ENCODE measurements at regions of chr6 and their contacts with region 1.

Region 1: GRCh38 chr6:99588618-99589289 is 17.9 kb upstream of the PRDM13 start:
- DNase-seq: peak in 8 of 9 experiments; percentile 32 to 78 (median 66)
- ATAC-seq: peak; percentile 89
- H3K4me3 ChIP-seq: peak overlapping the region; percentile 53 to 74
- H3K4me3 Mint-ChIP-seq: peak overlapping the region; percentile 89
- H3K27ac ChIP-seq: no peak overlapping the region
- H3K27ac Mint-ChIP-seq: no peak overlapping the region
- H3K4me1 ChIP-seq: peaks cover 18% of the 10 kb centered on the region
- H3K4me1 Mint-ChIP-seq: peaks cover 28% of the 10 kb centered on the region
- H3K27me3 ChIP-seq: peaks cover 22 to 35% of the 10 kb centered on the region in 2 experiments
- H3K27me3 Mint-ChIP-seq: peaks cover 61% of the 10 kb centered on the region
- CTCF ChIP-seq: peak; percentile 50

Region 2: DNA sequence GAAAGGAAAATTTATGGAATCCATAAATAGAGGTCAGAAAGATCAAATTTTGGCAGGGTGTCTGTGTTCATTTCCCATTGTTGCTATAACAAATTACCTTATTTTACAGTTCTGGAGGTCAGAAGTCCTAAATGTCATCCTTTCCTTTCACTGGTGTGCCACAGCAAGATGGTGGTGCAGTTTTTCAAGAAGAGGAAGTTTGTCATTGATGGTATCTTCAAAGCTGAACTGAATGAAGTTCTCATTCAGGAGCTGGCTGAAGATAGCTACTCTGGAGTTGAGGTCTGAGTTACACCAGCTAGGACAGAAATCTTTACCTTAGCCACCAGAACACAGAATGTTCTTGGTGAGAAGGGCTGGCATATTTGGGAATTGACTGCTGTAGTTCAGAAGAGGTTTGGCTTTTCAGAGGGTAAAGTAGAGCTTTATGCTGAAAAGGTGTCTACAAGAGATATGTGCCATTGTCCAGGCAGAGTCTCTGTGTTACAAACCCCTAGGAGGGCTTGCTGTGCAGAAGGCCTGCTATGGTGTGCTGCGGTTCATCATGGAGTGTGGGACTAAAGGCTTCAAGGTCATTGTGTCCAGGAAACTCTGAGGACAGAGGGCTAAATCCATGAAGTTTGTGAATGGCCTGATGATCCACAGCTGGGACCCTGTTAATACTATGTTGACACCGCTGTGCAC is 13.1 kb before region 1 on chr6:
- CTCF ChIA-PET with region 1: interaction called, 11 read pairs
- POLR2A ChIA-PET with region 1: interaction called, 4 read pairs
- intact Hi-C with region 1: no loop called
- DNase-seq: no peak
- ATAC-seq: no peak
- H3K4me3 ChIP-seq: no peak overlapping the region
- H3K4me3 Mint-ChIP-seq: no peak overlapping the region
- H3K27ac ChIP-seq: no peak overlapping the region
- H3K27ac Mint-ChIP-seq: no peak overlapping the region
- H3K4me1 ChIP-seq: no peaks in the 10 kb centered on the region
- H3K4me1 Mint-ChIP-seq: peaks cover 7% of the 10 kb centered on the region
- H3K27me3 ChIP-seq: peaks cover 0 to 2% of the 10 kb centered on the region in 2 experiments
- H3K27me3 Mint-ChIP-seq: peaks cover 13% of the 10 kb centered on the region
- CTCF ChIP-seq: no peak

Region 3: GRCh38 chr6:99603421-99604165 is 14.8 kb after region 1 on chr6:
- CTCF ChIA-PET with region 1: interaction called, 6 read pairs
- POLR2A ChIA-PET with region 1: interaction called, 4 read pairs
- intact Hi-C with region 1: loop called in 1 of 2 experiments (anchors 2 kb)
- DNase-seq: peak in 4 of 9 experiments; percentile 22 to 51 (median 36)
- ATAC-seq: peak; percentile 59
- H3K4me3 ChIP-seq: peak overlapping the region; percentile 35 to 38
- H3K4me3 Mint-ChIP-seq: peak overlapping the region; percentile 72
- H3K27ac ChIP-seq: no peak overlapping the region
- H3K27ac Mint-ChIP-seq: no peak overlapping the region
- H3K4me1 ChIP-seq: peaks cover 29% of the 10 kb centered on the region
- H3K4me1 Mint-ChIP-seq: peaks cover 25% of the 10 kb centered on the region
- H3K27me3 ChIP-seq: peaks cover 63 to 67% of the 10 kb centered on the region in 2 experiments
- H3K27me3 Mint-ChIP-seq: peaks cover 72% of the 10 kb centered on the region
- CTCF ChIP-seq: no peak

Region 4: GRCh38 chr6:99613409-99613704 is 24.6 kb after region 1 on chr6:
- CTCF ChIA-PET with region 1: interaction called, 5 read pairs
- POLR2A ChIA-PET with region 1: interaction called, 4 read pairs
- intact Hi-C with region 1: loop called (anchors 2 kb)
- DNase-seq: peak in 3 of 9 experiments; percentile 34 to 61 (median 56)
- ATAC-seq: peak; percentile 30
- H3K4me3 ChIP-seq: peak overlapping the region; percentile 13 to 18
- H3K4me3 Mint-ChIP-seq: no peak overlapping the region
- H3K27ac ChIP-seq: no peak overlapping the region
- H3K27ac Mint-ChIP-seq: no peak overlapping the region
- H3K4me1 ChIP-seq: peaks cover 18% of the 10 kb centered on the region
- H3K4me1 Mint-ChIP-seq: peaks cover 28% of the 10 kb centered on the region
- H3K27me3 ChIP-seq: peaks cover 52 to 54% of the 10 kb centered on the region in 2 experiments
- H3K27me3 Mint-ChIP-seq: peaks cover 81% of the 10 kb centered on the region
- CTCF ChIP-seq: no peak

Region 5: DNA sequence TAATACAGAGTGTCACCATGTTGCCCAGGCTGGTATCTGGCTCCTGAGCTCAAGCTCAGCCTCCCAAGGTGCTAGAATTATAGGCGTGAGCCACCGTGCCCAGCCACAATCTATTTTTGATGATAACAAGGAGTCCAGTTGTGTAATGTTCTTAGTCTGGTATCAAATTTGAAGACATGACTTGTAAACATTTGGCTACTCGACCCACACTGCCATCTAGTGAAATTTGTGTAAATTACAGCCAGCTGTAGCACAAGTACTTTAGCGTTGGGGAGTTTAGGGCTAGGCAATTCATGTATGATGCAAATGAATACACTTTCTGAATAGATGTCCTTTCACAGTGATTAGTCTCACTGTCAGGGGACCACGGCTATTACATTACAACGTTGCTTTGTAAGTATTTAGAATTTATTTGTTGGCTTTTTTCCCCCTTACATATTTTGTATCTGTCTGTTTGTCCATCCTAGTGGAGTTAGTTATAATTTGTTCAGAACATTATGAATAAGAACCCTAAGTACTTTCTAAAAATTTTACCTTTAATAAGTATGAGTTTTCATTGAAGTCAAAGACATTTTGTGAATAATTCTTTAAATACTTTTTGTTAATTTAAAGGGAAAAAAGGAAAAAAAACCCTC is 157.6 kb after region 1 on chr6:
- CTCF ChIA-PET with region 1: interaction called, 42 read pairs
- POLR2A ChIA-PET with region 1: no interaction called
- intact Hi-C with region 1: loop called (anchors 1 to 2 kb)
- DNase-seq: peak; percentile 19 to 77 (median 49)
- ATAC-seq: peak; percentile 82
- H3K4me3 ChIP-seq: no peak overlapping the region
- H3K4me3 Mint-ChIP-seq: no peak overlapping the region
- H3K27ac ChIP-seq: no peak overlapping the region
- H3K27ac Mint-ChIP-seq: no peak overlapping the region
- H3K4me1 ChIP-seq: no peaks in the 10 kb centered on the region
- H3K4me1 Mint-ChIP-seq: no peaks in the 10 kb centered on the region
- H3K27me3 ChIP-seq: peaks cover 0 to 4% of the 10 kb centered on the region in 2 experiments
- H3K27me3 Mint-ChIP-seq: peaks cover 27% of the 10 kb centered on the region
- CTCF ChIP-seq: peak; percentile 85

Region 6: DNA sequence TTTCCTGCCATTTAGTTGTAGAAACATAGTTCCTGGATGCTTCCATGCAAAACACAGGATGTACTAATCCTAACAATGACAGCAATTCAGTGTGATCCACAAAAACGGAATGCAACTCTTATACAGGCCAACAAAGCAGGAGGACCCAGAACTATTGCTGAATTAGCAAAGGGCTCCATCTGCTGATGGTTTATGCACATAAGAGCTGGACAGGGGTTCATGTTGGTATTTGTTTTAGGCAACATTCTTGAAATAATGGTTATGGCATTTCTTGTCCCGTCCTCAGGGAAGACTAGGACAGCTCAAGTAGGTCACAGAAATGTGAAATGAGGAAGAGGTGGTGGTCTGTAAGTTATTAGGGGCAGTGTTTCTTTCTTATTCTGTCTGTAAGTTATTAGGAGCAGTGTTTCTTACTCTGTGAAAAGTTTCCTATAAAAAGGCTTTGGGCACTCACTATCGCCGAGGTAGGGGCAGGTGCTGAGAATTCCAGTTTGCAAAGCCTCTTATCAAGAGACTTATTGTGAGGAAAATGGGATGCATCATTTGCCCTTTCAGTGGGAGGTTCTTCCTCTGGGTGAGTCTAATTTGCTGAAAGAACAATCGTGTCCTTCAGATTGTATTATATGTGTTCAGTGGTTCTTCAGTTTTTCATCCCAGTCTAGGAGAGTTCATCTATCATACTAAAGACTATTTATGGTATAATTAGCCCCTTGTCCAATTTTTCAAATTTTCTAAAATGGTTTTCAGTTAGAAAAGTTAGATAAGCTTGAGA is 234.2 kb after region 1 on chr6:
- CTCF ChIA-PET with region 1: interaction called, 3 read pairs
- POLR2A ChIA-PET with region 1: no interaction called
- intact Hi-C with region 1: loop called in 1 of 2 experiments (anchors 5 kb)
- DNase-seq: peak in 2 of 9 experiments; percentile 43 to 53
- ATAC-seq: peak; percentile 34
- H3K4me3 ChIP-seq: no peak overlapping the region
- H3K4me3 Mint-ChIP-seq: peak overlapping the region; percentile 50
- H3K27ac ChIP-seq: no peak overlapping the region
- H3K27ac Mint-ChIP-seq: no peak overlapping the region
- H3K4me1 ChIP-seq: no peaks in the 10 kb centered on the region
- H3K4me1 Mint-ChIP-seq: peaks cover 7% of the 10 kb centered on the region
- H3K27me3 ChIP-seq: peaks cover 4% of the 10 kb centered on the region in 2 experiments
- H3K27me3 Mint-ChIP-seq: peaks cover 31% of the 10 kb centered on the region
- CTCF ChIP-seq: no peak